ENCODE measurements at regions of chr19 and their contacts with region 1.

Region 1: GRCh38 chr19:45542234-45542668 is 35.0 kb downstream of the VASP start:
- DNase-seq: no peak
- H3K4me3 ChIP-seq: no peak overlapping the region
- H3K27ac ChIP-seq: no peak overlapping the region
- H3K4me1 ChIP-seq: no peaks in the 10 kb centered on the region
- H3K27me3 ChIP-seq: no peaks in the 10 kb centered on the region
- CTCF ChIP-seq: no peak
- EP300 ChIP-seq: no peak
- POLR2A ChIP-seq: no peak
- RAD21 ChIP-seq: no peak

Region 2: DNA sequence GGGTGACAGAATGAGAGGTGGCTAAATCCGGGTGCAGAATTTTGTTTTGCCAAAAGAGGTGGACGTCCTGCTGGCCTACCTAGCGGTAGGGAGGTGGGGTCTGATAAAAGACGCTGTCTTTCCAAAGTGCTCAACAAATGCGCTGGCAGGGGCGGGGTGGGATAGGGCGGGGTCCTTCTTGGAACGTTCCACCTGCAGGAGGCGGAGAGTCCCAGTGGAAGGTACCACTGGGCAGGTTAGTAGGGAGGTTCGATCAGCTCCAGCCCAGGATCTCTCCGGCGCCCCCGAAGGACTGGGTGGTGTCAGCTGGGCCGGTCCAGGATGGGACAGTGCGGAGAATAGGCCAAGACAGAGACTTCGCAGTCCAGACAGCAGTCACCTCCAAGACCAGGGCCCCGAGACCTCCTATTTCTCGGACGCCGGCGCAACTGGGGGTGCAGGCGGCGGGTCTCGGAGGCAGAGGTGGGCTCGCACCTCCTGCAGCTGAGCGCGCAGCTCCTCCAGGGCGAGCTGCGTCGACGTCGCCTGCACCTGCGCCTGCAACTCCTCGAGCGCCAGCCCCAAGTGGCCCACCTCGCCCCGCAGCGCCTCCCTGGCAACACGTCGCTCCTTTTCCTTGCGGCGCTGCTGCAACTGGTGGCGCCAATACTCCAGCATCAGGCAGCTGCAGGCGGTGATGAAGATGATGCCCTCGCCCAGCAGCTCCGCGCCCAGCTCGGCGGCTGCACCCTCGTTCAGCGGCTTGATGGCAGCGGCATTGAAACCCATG is 13.4 kb before region 1 on chr19:
- CTCF ChIA-PET with region 1: interaction called, 6 read pairs
- POLR2A ChIA-PET with region 1: interaction called, 16 read pairs
- DNase-seq: peak; percentile 87 to 88
- H3K4me3 ChIP-seq: peak overlapping the region; percentile 50 to 68 (median 58)
- H3K27ac ChIP-seq: 0 out of 2 replicates have a peak overlapping the region, but pooled peaks have one; percentile 1
- H3K4me1 ChIP-seq: peaks cover 0 to 14% (median 9%) of the 10 kb centered on the region in 4 experiments; a peak in 5 of 7 replicates
- H3K27me3 ChIP-seq: peaks cover 0 to 5% (median under 1%) of the 10 kb centered on the region in 4 experiments; a peak in 4 of 7 replicates
- CTCF ChIP-seq: peak; percentile 7 to 26 (median 14)
- EP300 ChIP-seq: peak in 1 of 2 experiments; percentile 98; a peak in 2 of 3 replicates
- POLR2A ChIP-seq: peak in 1 of 2 experiments; percentile 85; a peak in 1 of 3 replicates
- RAD21 ChIP-seq: peak; percentile 23 to 42; a peak in 3 of 4 replicates